Activated T-helper 2 cell treated with anti-CD3 and anti-CD28 coated beads, Interferon-gamma antibody, Interleukin-2, Interleukin-4, amounts not matched to agents 10 μg/mL and 5 μg/mL and 100 μg/mL, durations not matched to agents 14 hours and 24 hours and 36 hours (primary cell): ENCODE measurements at regions of chr11 and their contacts with region 1.

Region 1: GRCh38 chr11:6234387-6235107 is at the start of gene FHIP1B:
- DNase-seq: peak; percentile 100
- H3K4me3 Mint-ChIP-seq: peak within 1 kb of the TSS; percentile 97
- H3K27ac Mint-ChIP-seq: peak within 1 kb of the TSS; percentile 95
- H3K4me1 Mint-ChIP-seq: peaks cover 38% of the 10 kb centered on the region
- H3K27me3 Mint-ChIP-seq: no peaks in the 10 kb centered on the region
- total RNA-seq, gene FHIP1B: 17.6 and 17.9 TPM in 2 replicates

Region 2: DNA sequence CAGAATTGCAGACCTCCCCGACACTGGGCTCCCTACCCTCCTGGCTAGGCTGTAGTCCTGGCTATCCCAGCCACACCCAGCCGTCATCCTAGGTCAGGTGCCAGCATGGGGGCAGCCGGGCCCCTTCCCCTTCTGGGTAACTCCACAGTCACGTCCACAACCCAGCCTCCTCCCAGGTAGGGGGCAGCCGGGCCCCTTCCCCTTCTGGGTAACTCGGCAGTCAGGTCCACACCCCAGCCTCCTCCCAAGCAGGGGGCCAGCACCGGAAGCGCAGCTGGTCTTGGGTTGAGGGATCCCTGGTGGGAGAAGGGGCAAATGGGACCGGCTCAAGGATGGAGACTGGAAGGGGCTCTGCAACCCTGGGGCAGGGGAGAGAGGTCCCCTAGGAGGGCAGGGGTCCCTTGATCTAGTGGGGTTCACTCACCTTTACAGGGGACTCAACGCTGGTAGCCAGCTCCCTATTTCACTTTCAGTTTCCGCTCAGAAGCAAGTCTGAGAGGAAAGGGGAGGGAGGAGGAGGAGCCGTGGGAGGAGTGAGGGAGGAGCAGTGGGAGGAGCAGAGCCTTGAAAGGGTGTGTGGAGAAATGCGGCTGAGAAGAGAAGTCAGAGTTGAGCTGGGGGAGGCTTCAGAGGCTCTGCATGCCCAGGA is 1841.2 kb before region 1 on chr11 and contains the start of gene TRIM21:
- intact Hi-C with region 1: loop called (anchors 5 kb)
- DNase-seq: peak; percentile 87
- H3K4me3 Mint-ChIP-seq: peak within 1 kb of the TSS; percentile 90
- H3K27ac Mint-ChIP-seq: peak within 1 kb of the TSS; percentile 85
- H3K4me1 Mint-ChIP-seq: peaks cover 25% of the 10 kb centered on the region
- H3K27me3 Mint-ChIP-seq: no peaks in the 10 kb centered on the region
- total RNA-seq, gene TRIM21: 31.9 and 34.9 TPM in 2 replicates

Region 3: DNA sequence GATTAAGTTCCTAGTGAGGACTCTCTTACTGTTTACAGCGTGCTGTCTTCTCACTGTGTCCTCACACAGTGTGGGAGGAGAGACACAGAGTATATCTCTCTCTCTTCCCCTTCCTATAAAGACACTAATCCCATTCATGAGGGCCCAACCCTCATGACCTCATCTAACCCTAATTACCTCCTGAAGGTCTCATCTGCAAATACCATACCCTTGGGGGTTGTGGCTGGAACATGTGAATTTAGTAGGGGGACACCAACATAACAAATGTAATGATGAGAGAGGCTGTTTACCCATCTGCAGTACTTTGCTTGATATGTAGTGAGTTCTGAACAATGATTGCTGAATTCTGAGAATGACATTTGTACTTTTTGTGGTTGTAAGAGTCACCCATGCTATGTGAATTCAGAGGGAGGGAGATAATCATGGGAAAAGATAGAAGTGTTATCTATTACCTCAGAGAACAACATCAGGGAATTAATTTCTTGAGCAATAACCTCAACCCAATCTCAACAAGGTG is 40.4 kb before region 1 on chr11:
- intact Hi-C with region 1: loop called (anchors 1 kb)
- DNase-seq: no peak
- H3K4me3 Mint-ChIP-seq: no peak overlapping the region
- H3K27ac Mint-ChIP-seq: peak overlapping the region; percentile 54
- H3K4me1 Mint-ChIP-seq: peaks cover 29% of the 10 kb centered on the region
- H3K27me3 Mint-ChIP-seq: peaks cover 6% of the 10 kb centered on the region

Region 4: GRCh38 chr11:6258571-6259081 is 24.1 kb after region 1 on chr11:
- intact Hi-C with region 1: loop called (anchors 2 kb)
- DNase-seq: no peak
- H3K4me3 Mint-ChIP-seq: no peak overlapping the region
- H3K27ac Mint-ChIP-seq: no peak overlapping the region
- H3K4me1 Mint-ChIP-seq: no peaks in the 10 kb centered on the region
- H3K27me3 Mint-ChIP-seq: peaks cover 18% of the 10 kb centered on the region

Region 5: DNA sequence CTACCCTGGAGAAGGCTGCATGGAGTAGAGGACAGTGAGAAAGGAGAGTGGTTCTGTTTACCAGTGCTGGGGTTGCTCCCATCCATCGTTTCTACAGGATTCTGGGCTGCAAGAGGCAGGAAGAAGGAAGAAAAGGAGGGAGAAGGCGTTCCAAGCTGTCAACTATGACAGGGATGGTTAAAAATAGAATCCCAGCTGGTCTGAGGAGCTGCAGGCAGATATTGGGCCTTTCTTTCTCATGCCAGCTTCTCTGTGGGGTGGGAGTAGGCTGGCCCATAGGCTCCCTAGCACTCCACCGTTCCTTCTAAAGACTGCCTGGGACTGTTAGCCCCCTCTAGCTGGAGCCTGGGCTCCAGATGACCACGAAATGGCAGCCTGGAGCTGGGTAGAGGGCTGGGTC is 38.6 kb after region 1 on chr11:
- intact Hi-C with region 1: no loop called
- DNase-seq: no peak
- H3K4me3 Mint-ChIP-seq: no peak overlapping the region
- H3K27ac Mint-ChIP-seq: no peak overlapping the region
- H3K4me1 Mint-ChIP-seq: no peaks in the 10 kb centered on the region
- H3K27me3 Mint-ChIP-seq: peaks cover 48% of the 10 kb centered on the region

Region 6: DNA sequence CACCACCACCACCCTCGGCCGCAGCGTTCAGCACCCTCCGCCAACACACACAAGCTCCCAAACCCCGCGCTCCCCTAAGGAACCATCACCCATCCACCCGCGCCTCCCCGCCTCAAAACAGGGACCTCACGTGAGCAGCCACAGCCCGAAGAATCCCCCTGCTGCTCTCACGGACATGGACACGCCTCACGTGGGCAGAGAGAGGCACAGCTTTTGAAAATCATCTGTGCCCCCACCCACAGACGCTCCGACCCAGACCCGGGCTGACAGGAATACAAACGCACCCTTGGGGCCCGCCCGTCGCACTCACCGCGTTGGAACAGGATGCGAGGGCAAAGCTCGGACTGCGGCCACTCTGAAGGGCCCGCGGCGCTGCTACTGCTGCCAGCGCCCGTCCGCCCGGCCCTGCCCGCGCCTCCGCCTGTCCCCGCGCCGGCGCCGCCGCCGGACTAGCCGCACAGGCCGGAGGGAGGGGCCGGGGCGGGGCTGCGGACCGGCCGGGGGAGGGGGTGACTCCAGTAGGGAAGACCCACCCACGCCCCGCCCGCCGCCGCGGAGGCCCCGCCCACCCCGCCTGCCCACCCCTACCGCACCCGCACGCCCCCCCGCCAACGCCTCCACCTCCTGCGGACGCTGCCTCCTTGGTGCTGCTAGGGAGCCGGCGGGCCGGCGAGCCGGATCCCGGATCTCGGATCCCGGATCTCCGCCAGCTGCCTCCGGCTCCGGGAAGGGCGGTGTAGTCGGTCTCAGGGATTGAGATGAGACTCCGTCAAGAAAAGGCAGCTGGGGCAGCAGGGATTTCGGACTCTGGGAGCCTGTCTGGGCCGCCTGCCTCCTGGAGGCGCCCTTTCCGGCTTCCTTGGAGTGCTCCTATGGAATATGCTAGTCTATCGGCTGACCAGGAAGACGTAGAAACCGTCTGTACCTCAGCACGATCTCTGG is 239.2 kb after region 1 on chr11 and contains the start of gene TRIM3:
- intact Hi-C with region 1: loop called (anchors 2 kb)
- DNase-seq: peak; percentile 46
- H3K4me3 Mint-ChIP-seq: peak within 1 kb of the TSS; percentile 78
- H3K27ac Mint-ChIP-seq: peak within 1 kb of the TSS; percentile 13
- H3K4me1 Mint-ChIP-seq: peaks cover 13% of the 10 kb centered on the region
- H3K27me3 Mint-ChIP-seq: peaks cover 8% of the 10 kb centered on the region
- total RNA-seq, gene TRIM3: 3.6 and 6.8 TPM in 2 replicates

Region 7: DNA sequence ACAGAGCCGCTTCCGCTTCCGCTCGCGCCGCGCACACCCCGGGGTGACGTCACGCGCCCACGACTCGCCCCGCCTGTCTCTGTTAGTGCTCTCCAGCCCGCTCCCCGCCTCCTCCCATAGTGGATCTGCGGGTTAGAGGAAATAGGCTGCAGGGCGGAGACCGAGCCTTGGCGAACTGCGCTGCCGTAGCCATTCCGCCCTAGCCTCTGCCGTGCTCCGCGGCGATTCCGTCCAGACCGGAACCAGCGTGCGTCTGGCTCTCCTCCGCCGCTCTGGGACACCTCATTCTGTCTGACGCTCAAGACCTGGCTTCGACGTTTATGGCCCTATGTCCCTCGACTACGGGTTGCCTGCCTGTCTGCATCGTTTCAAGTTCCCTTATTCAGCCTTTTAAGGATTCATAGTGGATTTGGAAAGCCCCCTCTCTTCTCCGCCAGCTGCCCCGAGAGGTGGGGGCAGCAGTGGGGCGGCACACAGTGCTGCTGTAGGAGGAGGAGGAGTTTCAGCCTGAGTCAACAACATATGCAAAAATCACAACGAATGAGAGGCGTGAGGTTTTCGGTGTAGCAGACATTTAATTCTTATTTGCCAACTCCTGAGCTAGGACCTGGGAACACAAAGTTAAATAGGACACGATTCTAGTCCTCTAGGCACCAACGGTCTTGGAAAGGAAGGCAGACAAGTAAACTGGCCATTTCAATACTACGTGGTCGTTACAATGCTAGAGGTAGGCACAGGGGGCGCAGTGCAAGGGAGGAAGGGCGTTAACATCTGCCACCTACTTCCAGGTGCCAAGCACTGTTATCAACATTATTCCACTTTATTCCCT is 377.9 kb after region 1 on chr11 and contains the start of gene TAF10:
- intact Hi-C with region 1: loop called (anchors 10 kb)
- DNase-seq: peak; percentile 95
- H3K4me3 Mint-ChIP-seq: peak within 1 kb of the TSS; percentile 95
- H3K27ac Mint-ChIP-seq: peak within 1 kb of the TSS; percentile 83
- H3K4me1 Mint-ChIP-seq: peaks cover 30% of the 10 kb centered on the region
- H3K27me3 Mint-ChIP-seq: no peaks in the 10 kb centered on the region
- total RNA-seq, gene TAF10: 134 and 142 TPM in 2 replicates